ENCODE measurements at regions of chr1 and their contacts with region 1.

Region 1: GRCh38 chr1:23367791-23368561 is 1.7 kb downstream of the ZNF436 start:
- DNase-seq: peak; percentile 98
- H3K4me3 Mint-ChIP-seq: peak overlapping the region; percentile 95
- H3K27ac Mint-ChIP-seq: peak overlapping the region; percentile 96
- H3K4me1 Mint-ChIP-seq: peaks cover 27% of the 10 kb centered on the region
- H3K27me3 Mint-ChIP-seq: no peaks in the 10 kb centered on the region

Region 2: DNA sequence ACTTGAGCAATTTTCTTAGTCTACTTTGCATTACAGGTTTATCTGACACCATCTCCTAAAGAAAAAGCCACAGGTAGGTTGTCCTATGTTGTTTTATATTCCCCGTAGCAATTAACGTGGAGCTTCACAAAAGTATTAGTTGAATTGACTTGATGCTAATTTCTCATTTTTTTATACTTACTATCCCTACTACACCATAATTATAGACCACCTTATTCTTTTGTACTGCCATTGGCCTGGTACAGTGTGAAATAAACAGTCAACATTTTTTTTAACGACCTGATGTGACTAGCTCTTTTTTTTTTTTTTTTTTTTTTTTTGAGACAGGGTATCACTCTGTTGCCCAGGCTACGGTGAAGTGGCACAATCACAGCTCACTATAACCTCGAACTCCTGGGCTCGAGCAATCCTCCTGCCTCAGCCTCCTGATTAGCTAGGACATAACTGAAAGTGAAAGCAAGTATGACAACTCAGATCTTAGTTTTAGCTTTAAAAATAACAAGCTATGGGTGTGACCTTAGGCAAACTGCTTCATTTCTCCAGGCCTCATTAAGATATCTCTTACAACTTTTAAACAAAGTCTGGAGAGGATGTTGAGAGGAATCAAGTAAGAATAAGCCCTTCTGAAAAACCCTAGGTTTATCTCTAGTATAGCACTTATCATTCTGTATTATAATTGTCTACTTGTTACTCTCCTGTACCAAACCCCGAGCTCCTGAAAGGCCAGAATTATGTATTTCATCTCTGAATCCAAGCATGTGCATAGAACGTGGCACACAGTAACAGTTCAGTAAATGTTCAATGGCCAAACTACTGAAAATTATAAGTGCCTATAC is 248.8 kb before region 1 on chr1:
- intact Hi-C with region 1: loop called (anchors 10 kb)
- DNase-seq: peak; percentile 44
- H3K4me3 Mint-ChIP-seq: peak overlapping the region; percentile 9
- H3K27ac Mint-ChIP-seq: peak overlapping the region; percentile 67
- H3K4me1 Mint-ChIP-seq: peaks cover 70% of the 10 kb centered on the region
- H3K27me3 Mint-ChIP-seq: no peaks in the 10 kb centered on the region

Region 3: DNA sequence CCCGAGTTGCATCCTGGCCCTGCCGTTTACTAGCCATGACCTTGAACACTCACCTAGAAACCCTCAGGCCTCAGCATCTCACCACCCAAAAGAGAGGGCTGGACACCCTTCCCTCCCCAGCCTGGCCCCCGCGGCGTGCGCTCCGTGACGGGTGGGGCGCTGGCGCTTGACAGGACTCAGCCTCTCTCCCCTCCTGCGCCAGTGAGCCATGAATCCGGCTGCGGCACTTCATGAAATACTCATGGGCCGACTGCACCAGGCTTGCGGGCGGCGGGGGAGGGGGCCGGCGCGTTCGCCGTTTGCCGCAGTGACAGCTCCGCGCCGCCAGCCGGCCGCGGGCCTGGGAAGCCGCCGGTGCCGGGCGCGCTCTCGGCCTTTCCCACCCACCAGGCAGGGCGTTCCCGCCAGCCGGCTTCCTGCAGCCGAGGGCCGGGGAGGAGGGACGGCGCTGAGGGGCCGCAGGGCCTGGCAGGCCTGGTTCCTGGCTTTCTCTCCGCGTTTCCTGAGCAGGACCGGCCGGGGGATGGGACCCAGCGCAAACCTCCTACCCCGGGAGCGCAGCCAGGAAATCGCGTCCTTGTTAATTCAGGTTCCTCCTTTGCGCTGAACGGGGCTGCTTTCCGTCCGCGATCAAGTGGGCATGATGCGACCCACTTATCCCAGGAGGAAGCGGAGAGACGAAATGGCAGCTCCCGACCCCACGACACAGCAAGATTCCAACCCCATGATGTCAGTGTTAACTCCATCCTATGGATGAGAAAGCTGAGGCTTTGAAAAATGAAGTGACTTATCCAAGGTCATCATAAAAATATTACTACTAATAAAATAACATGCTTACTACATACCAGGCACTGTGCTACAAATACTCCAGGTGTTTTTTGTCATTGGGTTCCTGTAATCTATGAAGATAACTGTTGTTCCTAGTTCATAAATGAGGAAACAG is 190.3 kb before region 1 on chr1:
- intact Hi-C with region 1: no loop called
- DNase-seq: peak; percentile 32
- H3K4me3 Mint-ChIP-seq: peak overlapping the region; percentile 70
- H3K27ac Mint-ChIP-seq: no peak overlapping the region
- H3K4me1 Mint-ChIP-seq: peaks cover 10% of the 10 kb centered on the region
- H3K27me3 Mint-ChIP-seq: peaks cover 19% of the 10 kb centered on the region

Region 4: GRCh38 chr1:23344111-23344986 is 23.6 kb before region 1 on chr1 and contains the start of gene HNRNPR:
- intact Hi-C with region 1: loop called (anchors 1 kb)
- DNase-seq: peak; percentile 98
- H3K4me3 Mint-ChIP-seq: peak within 1 kb of the TSS; percentile 94
- H3K27ac Mint-ChIP-seq: peak within 1 kb of the TSS; percentile 100
- H3K4me1 Mint-ChIP-seq: peaks cover 48% of the 10 kb centered on the region
- H3K27me3 Mint-ChIP-seq: peaks cover 2% of the 10 kb centered on the region
- total RNA-seq, gene HNRNPR: 241 and 247 TPM in 2 replicates

Region 5: DNA sequence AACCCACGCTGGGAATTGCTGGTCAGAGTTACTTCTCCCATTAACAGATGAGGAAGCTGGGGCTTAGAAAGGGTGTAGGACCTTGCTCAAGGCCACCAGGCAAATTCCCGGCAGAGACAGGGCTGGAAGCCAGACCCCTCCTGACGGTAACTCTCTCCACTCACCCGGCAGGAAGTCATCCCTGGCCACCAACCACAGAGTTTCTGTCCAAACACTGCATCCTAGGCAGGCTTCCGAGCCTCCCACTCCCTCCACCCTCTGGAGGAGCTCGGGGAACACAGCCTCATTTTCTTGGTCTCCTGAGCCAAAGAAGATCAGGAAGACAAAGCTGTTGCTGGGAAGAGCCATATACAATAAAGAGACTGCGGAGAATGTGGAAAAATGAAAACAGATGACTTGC is 26.7 kb after region 1 on chr1:
- intact Hi-C with region 1: no loop called
- DNase-seq: no peak
- H3K4me3 Mint-ChIP-seq: no peak overlapping the region
- H3K27ac Mint-ChIP-seq: no peak overlapping the region
- H3K4me1 Mint-ChIP-seq: no peaks in the 10 kb centered on the region
- H3K27me3 Mint-ChIP-seq: no peaks in the 10 kb centered on the region

Region 6: DNA sequence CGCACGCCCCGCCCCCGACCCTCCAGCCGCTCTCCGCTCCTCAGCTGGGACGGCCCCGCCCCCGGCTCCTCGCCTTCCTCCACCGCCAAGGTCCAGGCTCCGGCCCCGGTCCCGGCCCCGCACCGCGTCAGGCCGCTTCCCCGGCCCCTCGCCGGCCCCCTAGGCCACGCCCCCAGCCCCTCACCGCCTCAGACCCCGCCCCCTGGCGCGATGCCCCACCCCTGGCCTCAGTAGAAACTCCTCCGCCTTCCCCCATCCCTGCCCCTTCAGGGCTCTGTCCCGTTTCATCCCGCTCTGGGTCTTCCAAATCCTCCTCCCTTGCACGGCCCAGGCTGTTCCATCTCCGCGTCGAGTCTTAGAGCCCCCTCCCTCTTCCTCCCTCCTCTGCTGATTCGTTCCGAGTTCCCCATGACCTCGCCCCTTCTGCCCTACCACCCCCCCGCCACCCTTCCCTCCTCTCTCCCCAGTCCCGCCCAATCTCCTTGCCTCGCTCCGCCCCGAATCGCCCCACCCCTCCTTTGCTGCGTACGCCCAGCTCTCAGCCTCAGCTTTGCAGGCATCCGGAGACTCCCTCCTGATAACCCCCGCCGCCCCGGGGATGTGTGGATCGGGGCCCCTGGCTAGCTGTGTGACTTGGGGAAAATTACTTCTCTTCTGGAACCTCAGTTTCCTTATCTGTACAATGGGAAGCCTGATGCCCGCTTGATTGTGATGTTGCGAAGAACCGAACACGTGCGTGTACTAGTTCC is 116.5 kb after region 1 on chr1:
- intact Hi-C with region 1: loop called (anchors 2 kb)
- DNase-seq: peak; percentile 81
- H3K4me3 Mint-ChIP-seq: peak overlapping the region; percentile 87
- H3K27ac Mint-ChIP-seq: peak overlapping the region; percentile 44
- H3K4me1 Mint-ChIP-seq: peaks cover 16% of the 10 kb centered on the region
- H3K27me3 Mint-ChIP-seq: peaks cover 61% of the 10 kb centered on the region

Region 7: DNA sequence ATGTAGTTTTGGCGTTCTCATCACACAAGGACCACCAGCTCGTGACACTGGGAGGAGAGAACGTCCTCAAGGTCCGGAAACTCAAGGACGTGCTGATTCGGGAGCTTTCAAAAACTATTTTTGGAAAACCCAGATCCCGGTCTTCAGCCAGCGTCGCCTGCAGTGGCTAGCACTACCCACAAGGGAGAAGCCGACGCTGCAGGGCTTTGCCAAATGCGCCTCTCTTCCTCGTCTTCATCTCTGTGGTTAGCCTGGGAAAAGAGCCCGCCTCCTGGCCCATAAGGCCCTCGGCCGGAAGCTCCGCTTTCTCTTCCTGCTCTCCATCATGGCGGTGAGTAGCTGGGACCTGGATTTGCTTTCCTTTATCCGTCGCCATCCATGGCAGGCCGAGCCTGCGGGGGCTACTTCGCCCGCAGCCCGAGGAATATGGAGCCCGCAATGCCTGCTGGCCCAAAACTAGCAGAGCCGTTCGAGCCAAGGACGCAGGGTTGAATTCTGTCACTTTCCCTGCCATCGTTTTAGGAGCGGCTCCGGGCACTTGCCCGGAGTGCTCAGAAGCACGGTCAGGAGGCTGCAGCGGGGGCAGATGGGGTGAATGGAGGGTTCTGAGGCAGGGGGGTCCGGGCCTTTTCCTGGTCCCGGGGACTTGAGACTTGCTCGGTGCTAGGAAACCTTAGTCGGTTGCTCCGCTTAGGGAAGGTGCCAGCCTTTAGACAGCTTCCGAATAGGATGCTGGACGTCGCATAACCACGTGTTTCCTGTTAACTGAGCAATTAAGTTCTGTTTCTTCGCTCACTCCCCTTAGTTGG is 323.7 kb after region 1 on chr1 and contains the start of gene RPL11:
- intact Hi-C with region 1: loop called (anchors 2 kb)
- DNase-seq: peak; percentile 82
- H3K4me3 Mint-ChIP-seq: peak within 1 kb of the TSS; percentile 97
- H3K27ac Mint-ChIP-seq: peak within 1 kb of the TSS; percentile 90
- H3K4me1 Mint-ChIP-seq: peaks cover 45% of the 10 kb centered on the region
- H3K27me3 Mint-ChIP-seq: no peaks in the 10 kb centered on the region
- total RNA-seq, gene RPL11: 1,058 and 1,119 TPM in 2 replicates

Region 8: DNA sequence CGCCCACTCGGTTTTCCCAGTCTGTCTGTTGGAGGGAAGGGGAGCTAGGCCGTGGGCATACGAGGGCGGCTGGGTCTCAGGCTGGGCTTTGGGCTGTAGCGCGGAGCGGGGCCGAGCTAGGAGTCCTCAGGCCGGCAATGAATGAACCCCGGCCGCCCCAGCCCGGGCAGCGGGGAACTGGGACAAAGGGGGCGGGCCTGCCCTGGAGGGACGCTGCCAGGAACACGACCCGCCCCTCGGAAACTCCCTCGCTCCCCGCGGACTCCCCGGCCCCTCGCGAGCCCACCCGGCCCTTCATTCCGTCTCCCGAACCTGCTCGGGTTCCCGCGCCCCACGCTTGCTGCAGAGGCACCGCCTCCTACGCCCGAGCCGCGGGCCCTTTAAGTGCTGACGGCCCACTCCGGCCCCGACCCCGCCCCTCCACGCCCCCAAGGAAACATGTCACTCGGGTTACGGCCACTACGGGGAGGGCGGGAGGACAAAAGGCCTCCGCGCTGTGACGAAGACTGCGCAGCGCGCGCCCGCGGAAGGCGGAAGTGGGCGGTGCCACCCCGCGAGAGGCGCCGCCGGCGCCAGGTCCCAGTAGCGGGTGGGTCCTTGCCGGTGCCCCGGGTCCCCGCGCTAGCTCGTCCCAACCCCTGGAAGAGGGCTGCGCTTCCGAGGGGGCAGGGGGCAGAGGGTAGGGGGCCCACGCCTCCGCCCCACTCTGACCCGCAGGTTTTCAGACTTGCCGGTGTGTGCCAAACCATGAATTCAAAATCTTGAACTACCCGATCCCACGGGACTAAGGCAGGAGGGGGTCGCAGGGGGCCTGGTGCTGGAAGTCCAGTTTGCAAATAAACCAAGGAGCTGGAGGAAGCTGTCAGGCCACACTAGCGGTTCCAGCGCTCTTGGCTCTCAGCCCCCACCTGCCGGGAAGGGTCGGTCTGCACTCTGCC is 432.7 kb after region 1 on chr1 and contains the start of gene GALE:
- intact Hi-C with region 1: loop called (anchors 1 kb)
- DNase-seq: peak; percentile 93
- H3K4me3 Mint-ChIP-seq: peak within 1 kb of the TSS; percentile 97
- H3K27ac Mint-ChIP-seq: peak within 1 kb of the TSS; percentile 88
- H3K4me1 Mint-ChIP-seq: peaks cover 13% of the 10 kb centered on the region
- H3K27me3 Mint-ChIP-seq: peaks cover 2% of the 10 kb centered on the region
- total RNA-seq, gene GALE: 62.4 and 63.4 TPM in 2 replicates